ENCODE measurements at regions of chr19 and their contacts with region 1.

Region 1: DNA sequence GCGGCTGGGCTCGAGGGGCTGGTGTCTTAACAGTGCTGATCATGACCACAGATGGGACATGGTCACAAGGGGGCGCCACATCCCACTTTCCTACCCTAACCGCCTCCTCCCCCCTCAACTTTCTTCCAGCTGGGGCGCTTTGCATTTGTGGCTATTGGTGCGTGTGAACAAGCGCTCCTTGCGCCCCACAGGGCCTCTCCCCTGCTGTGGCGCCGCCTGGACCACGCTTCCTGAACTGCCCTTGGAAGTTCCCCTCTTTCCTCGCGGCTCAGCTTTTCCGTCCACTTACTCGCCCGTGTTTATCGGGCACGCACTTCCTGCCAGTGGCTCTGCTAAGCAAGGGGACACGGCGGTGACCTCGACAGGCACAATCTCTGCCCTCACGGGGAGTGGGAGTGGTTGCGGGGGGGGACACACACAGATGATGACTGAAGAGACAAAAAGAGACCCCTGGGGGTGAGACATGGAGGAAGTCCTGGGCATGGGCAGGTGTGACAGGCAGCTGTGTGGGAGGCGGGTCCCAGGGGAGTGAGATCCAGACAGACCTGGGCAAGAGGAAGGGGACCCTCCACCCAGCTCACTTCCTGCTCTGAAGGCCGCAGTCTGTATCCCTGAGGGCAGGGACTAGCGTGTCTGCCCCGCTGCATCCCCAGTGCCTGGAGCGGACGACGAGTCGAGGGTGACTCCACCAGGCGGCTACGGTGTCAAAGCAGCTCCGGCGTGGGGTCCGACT is 40.3 kb downstream of the ZNF787 start:
- DNase-seq: peak; percentile 57
- H3K4me3 ChIP-seq: peak overlapping the region in 2 of 3 experiments; percentile 32 to 49
- H3K27ac ChIP-seq: no peak overlapping the region
- H3K4me1 ChIP-seq: peaks cover 23% of the 10 kb centered on the region
- H3K27me3 ChIP-seq: no peaks in the 10 kb centered on the region
- CTCF ChIP-seq: peak; percentile 50 to 65

Region 2: DNA sequence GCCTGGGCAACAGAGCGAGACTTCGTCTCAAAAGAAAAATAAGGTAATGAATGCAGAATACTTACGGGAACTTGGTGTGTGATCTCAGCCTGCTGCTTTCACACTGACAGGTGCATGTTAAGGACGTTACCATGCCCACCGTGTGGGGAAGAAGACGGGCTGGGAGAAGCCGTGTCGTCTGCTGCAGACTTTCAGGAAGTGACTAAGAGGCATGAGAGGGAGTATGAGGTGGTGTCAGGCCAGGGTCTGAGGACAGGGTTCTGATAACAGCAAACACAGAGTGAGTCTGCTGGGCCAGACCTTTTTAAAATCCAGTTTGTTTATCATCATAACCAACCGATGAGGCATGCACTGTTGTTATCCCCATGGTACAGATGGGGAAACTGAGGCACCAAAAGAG is 81.4 kb after region 1 on chr19:
- CTCF ChIA-PET with region 1: no interaction called
- dilution Hi-C with region 1: no loop called
- in situ Hi-C with region 1: loop called in 1 of 2 experiments (anchors 10 kb)
- intact Hi-C with region 1: no loop called
- DNase-seq: no peak
- H3K4me3 ChIP-seq: no peak overlapping the region
- H3K27ac ChIP-seq: no peak overlapping the region
- H3K4me1 ChIP-seq: no peaks in the 10 kb centered on the region
- H3K27me3 ChIP-seq: no peaks in the 10 kb centered on the region
- CTCF ChIP-seq: no peak

Region 3: DNA sequence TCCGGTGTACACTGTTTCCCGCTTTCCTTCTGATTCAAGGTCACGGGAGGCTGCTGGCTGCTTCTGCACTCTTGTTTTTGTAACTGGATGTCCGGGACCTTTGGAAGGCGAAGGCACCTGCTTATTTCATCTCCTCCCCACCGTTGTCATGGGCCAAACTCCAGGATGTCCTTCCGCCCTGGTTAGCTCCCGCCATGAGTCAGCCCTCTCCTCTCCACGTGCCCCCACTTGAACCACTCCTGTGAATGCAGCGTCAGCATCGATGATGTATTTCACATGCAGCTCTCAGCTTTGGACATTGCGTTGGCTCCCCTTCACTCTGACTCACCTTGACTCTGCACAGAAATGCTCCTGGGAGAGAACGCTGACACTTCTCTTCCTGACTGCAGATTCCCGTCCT is 89.4 kb after region 1 on chr19:
- CTCF ChIA-PET with region 1: no interaction called
- dilution Hi-C with region 1: no loop called
- in situ Hi-C with region 1: loop called in 1 of 2 experiments (anchors 10 kb)
- intact Hi-C with region 1: loop called (anchors 1 kb)
- DNase-seq: peak; percentile 75
- H3K4me3 ChIP-seq: no peak overlapping the region
- H3K27ac ChIP-seq: no peak overlapping the region
- H3K4me1 ChIP-seq: no peaks in the 10 kb centered on the region
- H3K27me3 ChIP-seq: no peaks in the 10 kb centered on the region
- CTCF ChIP-seq: no peak

Region 4: DNA sequence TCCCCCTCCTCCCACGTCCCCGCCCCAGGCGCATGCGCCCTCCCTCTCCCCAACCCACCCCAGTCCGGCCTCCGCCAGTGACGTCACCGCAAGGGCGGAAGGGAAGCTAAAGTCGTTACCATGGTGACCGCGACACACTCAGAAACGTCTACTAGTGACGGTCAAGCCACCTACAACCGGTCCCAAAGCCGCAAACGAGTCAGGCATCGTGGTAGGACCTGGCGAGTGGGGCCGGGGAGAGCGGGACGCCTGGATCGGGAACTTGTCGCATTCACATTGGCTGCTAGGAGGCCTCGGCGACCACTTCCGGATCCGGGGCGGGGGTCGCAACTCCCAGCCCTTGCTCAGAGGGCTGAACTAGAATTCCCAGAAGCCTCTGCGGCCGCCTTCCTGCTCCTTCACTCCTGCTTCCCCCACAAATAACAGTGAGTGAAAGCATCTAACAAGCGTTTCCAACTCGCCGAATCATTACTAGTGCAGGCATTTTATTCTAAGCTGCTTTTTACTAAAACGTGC is 233.8 kb after region 1 on chr19 and contains the start of gene ZSCAN5A:
- CTCF ChIA-PET with region 1: interaction called, 21 read pairs
- dilution Hi-C with region 1: no loop called
- in situ Hi-C with region 1: loop called in 1 of 2 experiments (anchors 10 kb)
- intact Hi-C with region 1: no loop called
- DNase-seq: peak; percentile 95
- H3K4me3 ChIP-seq: peak within 1 kb of the TSS; percentile 66 to 91 (median 80)
- H3K27ac ChIP-seq: peak within 1 kb of the TSS; percentile 95
- H3K4me1 ChIP-seq: peaks cover 6% of the 10 kb centered on the region
- H3K27me3 ChIP-seq: no peaks in the 10 kb centered on the region
- CTCF ChIP-seq: no peak
- total RNA-seq, gene ZSCAN5A: 5.5 to 7.4 TPM

Region 5: DNA sequence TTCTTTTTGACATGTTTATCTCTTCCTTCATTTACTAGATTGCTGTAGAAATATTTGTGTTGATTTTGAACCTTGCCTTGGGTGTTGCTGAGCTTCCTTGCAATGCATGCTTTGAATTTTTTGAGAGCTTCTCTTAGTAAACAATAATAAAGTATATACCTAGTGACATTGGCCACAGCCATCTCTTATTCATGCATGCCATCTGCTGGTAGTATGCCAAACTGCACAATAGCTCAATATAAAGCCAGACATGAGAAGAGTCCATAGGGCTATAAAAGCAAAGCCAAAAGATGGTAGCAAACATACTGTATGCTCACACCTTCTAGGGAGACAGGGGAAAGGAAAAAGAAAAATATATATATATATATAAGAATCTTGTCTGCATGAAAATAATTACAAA is 252.7 kb after region 1 on chr19:
- CTCF ChIA-PET with region 1: no interaction called
- dilution Hi-C with region 1: no loop called
- in situ Hi-C with region 1: loop called in 1 of 2 experiments (anchors 10 kb)
- intact Hi-C with region 1: loop called (anchors 1 kb)
- DNase-seq: peak; percentile 40
- H3K4me3 ChIP-seq: no peak overlapping the region
- H3K27ac ChIP-seq: no peak overlapping the region
- H3K4me1 ChIP-seq: no peaks in the 10 kb centered on the region
- H3K27me3 ChIP-seq: no peaks in the 10 kb centered on the region
- CTCF ChIP-seq: peak; percentile 83 to 88

Region 6: GRCh38 chr19:57103573-57104277 is 1022.9 kb after region 1 on chr19:
- CTCF ChIA-PET with region 1: no interaction called
- dilution Hi-C with region 1: no loop called
- in situ Hi-C with region 1: no loop called
- intact Hi-C with region 1: loop called (anchors 5 kb)
- DNase-seq: peak; percentile 46
- H3K4me3 ChIP-seq: peak overlapping the region; percentile 11 to 25 (median 17)
- H3K27ac ChIP-seq: no peak overlapping the region
- H3K4me1 ChIP-seq: peaks cover 6% of the 10 kb centered on the region
- H3K27me3 ChIP-seq: no peaks in the 10 kb centered on the region
- CTCF ChIP-seq: peak; percentile 90 to 91